Activated CD4-positive, alpha-beta memory T cell treated with anti-CD3 and anti-CD28 coated beads for 36 hours (primary cell): ENCODE measurements at regions of chr20 and their contacts with region 1.

Region 1: GRCh38 chr20:34955232-34956040 is at the starts of genes GSS and MYH7B:
- DNase-seq: peak; percentile 99
- H3K4me3 Mint-ChIP-seq: peak within 1 kb of the TSS; percentile 92
- H3K27ac Mint-ChIP-seq: peak within 1 kb of the TSS; percentile 89
- H3K4me1 Mint-ChIP-seq: peaks cover 24% of the 10 kb centered on the region
- H3K27me3 Mint-ChIP-seq: no peaks in the 10 kb centered on the region
- total RNA-seq, gene GSS: 67.7 to 72.2 TPM
- total RNA-seq, gene MYH7B: 0.50 to 0.61 TPM

Region 2: GRCh38 chr20:34709831-34710567 is 245.4 kb before region 1 on chr20:
- CTCF ChIA-PET with region 1: no interaction called
- POLR2A ChIA-PET with region 1: interaction called, 5 read pairs
- intact Hi-C with region 1: loop called (anchors 5 kb)
- DNase-seq: no peak
- H3K4me3 Mint-ChIP-seq: peak overlapping the region; percentile 78
- H3K27ac Mint-ChIP-seq: peak overlapping the region; percentile 81
- H3K4me1 Mint-ChIP-seq: peaks cover 19% of the 10 kb centered on the region
- H3K27me3 Mint-ChIP-seq: no peaks in the 10 kb centered on the region

Region 3: GRCh38 chr20:34825530-34826362 is 129.7 kb before region 1 on chr20 and contains the start of gene NCOA6:
- CTCF ChIA-PET with region 1: interaction called, 6 read pairs
- POLR2A ChIA-PET with region 1: no interaction called
- intact Hi-C with region 1: loop called (anchors 1 kb)
- DNase-seq: peak; percentile 91
- H3K4me3 Mint-ChIP-seq: peak within 1 kb of the TSS; percentile 99
- H3K27ac Mint-ChIP-seq: peak within 1 kb of the TSS; percentile 94
- H3K4me1 Mint-ChIP-seq: peaks cover 37% of the 10 kb centered on the region
- H3K27me3 Mint-ChIP-seq: no peaks in the 10 kb centered on the region
- total RNA-seq, gene NCOA6: 19.6 to 20.7 TPM

Region 4: GRCh38 chr20:34834459-34834893 is 121.0 kb before region 1 on chr20:
- CTCF ChIA-PET with region 1: interaction called, 4 read pairs
- POLR2A ChIA-PET with region 1: no interaction called
- intact Hi-C with region 1: loop called (anchors 2 kb)
- DNase-seq: no peak
- H3K4me3 Mint-ChIP-seq: no peak overlapping the region
- H3K27ac Mint-ChIP-seq: peak overlapping the region; percentile 42
- H3K4me1 Mint-ChIP-seq: no peaks in the 10 kb centered on the region
- H3K27me3 Mint-ChIP-seq: peaks cover 10% of the 10 kb centered on the region

Region 5: DNA sequence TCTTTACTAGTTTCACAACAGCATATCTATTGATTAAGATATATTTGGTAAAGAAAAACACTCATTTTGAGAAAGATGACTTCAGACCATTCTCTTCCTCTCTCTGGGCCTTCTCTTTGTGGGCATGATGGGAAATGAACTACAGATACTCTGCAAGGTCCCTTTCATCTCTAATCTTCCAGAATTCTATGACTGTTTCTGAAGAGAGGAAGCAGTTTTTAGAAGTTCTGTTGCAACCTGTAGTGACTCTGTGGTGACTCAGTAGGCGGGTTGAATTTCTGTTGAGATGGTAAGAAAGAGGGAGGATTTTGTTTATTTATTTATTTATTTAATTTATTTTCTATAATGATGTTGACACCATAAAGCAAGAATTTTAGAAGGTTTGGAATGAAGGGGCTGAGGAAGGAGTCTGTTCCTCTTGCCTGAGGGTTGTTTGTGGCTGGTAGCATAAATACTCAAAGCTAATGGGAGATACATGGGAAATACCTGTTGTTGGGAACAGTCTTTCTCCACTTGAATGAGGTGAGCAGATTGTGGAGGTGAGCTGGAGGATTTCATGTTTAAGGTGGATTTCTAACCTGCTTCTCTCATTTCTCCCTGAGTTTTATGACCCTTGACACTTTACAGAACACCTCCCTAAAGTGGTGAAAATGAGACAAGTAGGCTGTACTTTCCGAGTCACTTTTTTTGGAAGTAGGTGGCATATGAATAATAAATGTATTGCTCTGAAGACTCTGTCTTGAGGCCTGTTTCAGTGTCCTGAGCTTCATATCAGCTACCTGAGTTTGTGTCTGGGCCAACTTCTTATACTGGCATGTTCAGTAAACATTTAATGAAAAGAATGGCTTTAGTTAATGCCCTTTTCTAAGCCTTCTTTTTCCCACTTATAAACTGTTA is 64.0 kb before region 1 on chr20:
- CTCF ChIA-PET with region 1: interaction called, 3 read pairs
- POLR2A ChIA-PET with region 1: interaction called, 4 read pairs
- intact Hi-C with region 1: loop called (anchors 5 kb)
- DNase-seq: peak; percentile 60
- H3K4me3 Mint-ChIP-seq: peak overlapping the region; percentile 10
- H3K27ac Mint-ChIP-seq: peak overlapping the region; percentile 80
- H3K4me1 Mint-ChIP-seq: peaks cover 40% of the 10 kb centered on the region
- H3K27me3 Mint-ChIP-seq: no peaks in the 10 kb centered on the region

Region 6: DNA sequence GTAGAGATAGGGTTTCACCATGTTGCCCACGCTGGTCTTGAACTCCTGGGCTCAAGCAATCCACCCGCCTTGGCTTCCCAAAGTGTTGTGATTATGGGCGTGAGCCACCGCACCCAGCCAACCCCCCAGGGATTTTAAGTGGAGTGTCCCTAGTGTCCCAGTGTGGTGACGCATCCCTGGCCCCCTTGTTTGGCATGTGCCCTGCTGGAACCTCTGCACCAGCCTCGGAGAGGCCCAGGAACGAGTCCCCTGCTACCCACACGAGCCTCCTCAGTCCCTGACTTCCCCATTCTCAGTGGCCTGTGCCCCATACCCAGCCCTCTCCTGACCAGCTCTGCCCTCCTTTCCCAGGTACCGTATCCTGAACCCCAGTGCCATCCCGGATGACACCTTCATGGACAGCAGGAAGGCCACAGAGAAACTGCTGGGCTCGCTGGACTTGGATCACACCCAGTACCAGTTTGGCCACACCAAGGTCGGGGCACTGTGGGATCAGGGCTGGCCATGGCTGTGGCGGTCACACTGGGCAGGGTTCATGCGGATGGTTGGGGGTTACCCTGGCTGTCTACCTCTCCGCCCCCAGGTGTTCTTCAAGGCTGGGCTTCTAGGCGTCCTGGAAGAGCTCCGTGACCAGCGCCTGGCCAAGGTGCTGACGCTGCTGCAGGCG is 37.4 kb after region 1 on chr20:
- CTCF ChIA-PET with region 1: no interaction called
- POLR2A ChIA-PET with region 1: no interaction called
- intact Hi-C with region 1: no loop called
- DNase-seq: no peak
- H3K4me3 Mint-ChIP-seq: no peak overlapping the region
- H3K27ac Mint-ChIP-seq: no peak overlapping the region
- H3K4me1 Mint-ChIP-seq: peaks cover 3% of the 10 kb centered on the region
- H3K27me3 Mint-ChIP-seq: no peaks in the 10 kb centered on the region

Region 7: DNA sequence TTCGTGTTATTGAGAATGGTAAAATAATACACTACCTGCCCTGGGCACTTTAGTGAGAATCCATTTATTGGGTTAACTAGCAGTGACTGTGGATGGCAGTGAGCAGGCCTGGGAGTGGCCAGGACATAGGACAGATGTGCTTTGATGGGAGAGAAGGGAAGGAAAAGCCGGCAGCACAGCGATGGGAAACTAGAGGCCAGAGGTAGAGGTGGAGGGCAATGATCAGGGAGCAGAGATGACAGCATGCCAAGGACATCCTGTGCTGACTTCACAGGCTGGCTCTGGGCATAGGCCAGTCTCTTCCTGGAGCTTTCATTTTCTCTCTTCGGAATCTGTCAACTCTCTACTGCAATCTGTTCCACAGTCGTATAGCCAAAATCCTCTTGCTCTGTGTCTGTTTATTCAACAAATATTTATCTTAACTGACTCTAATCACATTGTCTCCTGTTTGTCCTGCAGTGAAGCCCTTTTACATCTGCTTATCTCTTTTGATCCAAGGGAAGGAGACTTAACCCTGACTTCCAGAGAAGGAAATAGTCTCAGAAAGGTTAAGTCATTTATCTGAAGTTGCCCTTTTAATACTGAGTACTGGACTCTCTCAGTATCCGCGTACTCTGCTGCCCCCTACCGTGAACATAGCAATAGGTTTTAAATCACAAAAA is 252.6 kb after region 1 on chr20:
- CTCF ChIA-PET with region 1: interaction called, 3 read pairs
- POLR2A ChIA-PET with region 1: no interaction called
- intact Hi-C with region 1: loop called (anchors 10 kb)
- DNase-seq: peak; percentile 83
- H3K4me3 Mint-ChIP-seq: no peak overlapping the region
- H3K27ac Mint-ChIP-seq: no peak overlapping the region
- H3K4me1 Mint-ChIP-seq: no peaks in the 10 kb centered on the region
- H3K27me3 Mint-ChIP-seq: no peaks in the 10 kb centered on the region